BJ (cell line): ENCODE measurements at regions of chr22 and their contacts with region 1.

Region 1: GRCh38 chr22:26835929-26836528 is 178.6 kb downstream of the MIAT start:
- DNase-seq: no peak
- H3K4me3 ChIP-seq: no peak overlapping the region
- H3K27me3 ChIP-seq: no peaks in the 10 kb centered on the region; the same call in 1 of the 2 replicates
- CTCF ChIP-seq: peak; percentile 65

Region 2: DNA sequence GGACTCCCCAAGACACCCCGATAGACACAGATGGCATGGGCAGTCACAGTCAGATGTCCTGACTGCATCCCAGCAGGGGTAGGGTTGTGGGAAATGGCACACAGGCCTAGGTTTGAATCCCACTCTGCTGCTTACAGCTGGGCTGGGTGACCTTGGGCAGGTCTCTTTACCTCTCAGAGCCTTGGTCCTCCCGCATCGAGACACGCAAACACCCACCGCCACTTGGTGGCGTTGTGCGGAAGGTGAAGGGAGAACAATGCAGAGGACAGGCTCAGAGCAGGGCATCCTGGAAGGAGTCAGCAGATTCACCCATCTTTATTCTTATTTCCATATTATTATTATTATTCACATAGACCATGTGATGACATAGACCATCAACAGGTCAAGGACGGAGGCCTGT is 38.1 kb before region 1 on chr22:
- CTCF ChIA-PET with region 1: no interaction called
- POLR2A ChIA-PET with region 1: no interaction called
- DNase-seq: no peak
- H3K4me3 ChIP-seq: no peak overlapping the region
- H3K27me3 ChIP-seq: no peaks in the 10 kb centered on the region
- CTCF ChIP-seq: no peak

Region 3: GRCh38 chr22:26822299-26822698 is 13.7 kb before region 1 on chr22:
- CTCF ChIA-PET with region 1: interaction called, 19 read pairs
- POLR2A ChIA-PET with region 1: interaction called, 4 read pairs
- DNase-seq: no peak
- H3K4me3 ChIP-seq: no peak overlapping the region
- H3K27me3 ChIP-seq: no peaks in the 10 kb centered on the region
- CTCF ChIP-seq: no peak